ENCODE measurements at regions of chr14 and their contacts with region 1.

Region 1: GRCh38 chr14:68466491-68467032 is 326.3 kb downstream of the ZFP36L1 start:
- DNase-seq: peak; percentile 96
- ATAC-seq: peak; percentile 34
- H3K4me3 ChIP-seq: no peak overlapping the region; the same call in 1 of the 2 replicates
- H3K27ac ChIP-seq: peak overlapping the region; percentile 55
- H3K4me1 ChIP-seq: peaks cover 59% of the 10 kb centered on the region
- H3K27me3 ChIP-seq: no peaks in the 10 kb centered on the region
- CTCF ChIP-seq: no peak

Region 2: DNA sequence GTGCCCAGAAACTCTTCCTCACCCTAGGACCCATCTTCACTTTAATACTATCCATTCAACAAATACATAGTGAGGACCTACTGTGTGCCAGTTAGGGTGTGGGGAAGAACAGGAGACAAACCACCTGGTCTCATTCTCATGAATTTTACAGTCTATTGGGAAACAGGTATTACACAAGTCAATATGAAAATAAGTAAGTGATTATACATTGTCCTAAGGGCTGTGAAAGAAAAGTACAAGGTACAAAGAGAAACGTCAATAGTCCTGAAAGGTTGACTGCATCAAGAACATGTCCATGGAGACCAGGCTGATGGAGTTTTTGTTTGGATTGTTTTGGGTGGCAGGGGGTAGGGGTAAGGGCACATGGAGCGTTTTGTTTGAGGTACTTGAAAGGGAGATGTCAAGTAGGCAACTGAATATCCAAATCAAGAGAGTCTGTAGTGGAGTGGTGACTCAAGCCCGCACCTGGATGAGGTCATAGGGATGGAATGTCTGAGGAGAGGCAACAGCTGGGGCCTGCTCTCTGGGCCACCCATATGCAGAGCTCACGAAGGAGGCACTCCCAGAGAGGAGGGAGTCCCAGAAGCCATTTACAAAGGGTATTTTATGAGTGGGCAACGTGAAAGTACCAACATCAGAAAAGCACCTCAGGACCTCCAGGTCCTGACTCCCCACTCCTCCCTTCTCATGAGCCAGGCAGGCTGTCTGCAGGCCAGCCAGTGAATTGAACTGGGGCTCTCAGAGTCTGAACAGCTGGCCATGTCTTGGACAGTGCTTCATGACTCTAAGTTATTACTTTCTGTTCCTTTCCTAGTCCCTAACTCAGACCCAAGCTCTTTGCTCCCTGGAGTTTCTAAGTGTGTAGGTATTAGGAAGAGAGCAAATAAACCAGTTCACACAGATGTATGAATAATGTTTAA is 54.3 kb after region 1 on chr14:
- CTCF ChIA-PET with region 1: no interaction called
- POLR2A ChIA-PET with region 1: no interaction called
- intact Hi-C with region 1: loop called (anchors 5 kb)
- DNase-seq: peak; percentile 95
- ATAC-seq: peak; percentile 99
- H3K4me3 ChIP-seq: no peak overlapping the region
- H3K27ac ChIP-seq: peak overlapping the region; percentile 55
- H3K4me1 ChIP-seq: peaks cover 20% of the 10 kb centered on the region
- H3K27me3 ChIP-seq: no peaks in the 10 kb centered on the region
- CTCF ChIP-seq: no peak

Measured in PC-3 (cell line).